Naive thymus-derived CD4-positive, alpha-beta T cell (primary cell): ENCODE measurements at regions of chr12 and their contacts with region 1.

Region 1: DNA sequence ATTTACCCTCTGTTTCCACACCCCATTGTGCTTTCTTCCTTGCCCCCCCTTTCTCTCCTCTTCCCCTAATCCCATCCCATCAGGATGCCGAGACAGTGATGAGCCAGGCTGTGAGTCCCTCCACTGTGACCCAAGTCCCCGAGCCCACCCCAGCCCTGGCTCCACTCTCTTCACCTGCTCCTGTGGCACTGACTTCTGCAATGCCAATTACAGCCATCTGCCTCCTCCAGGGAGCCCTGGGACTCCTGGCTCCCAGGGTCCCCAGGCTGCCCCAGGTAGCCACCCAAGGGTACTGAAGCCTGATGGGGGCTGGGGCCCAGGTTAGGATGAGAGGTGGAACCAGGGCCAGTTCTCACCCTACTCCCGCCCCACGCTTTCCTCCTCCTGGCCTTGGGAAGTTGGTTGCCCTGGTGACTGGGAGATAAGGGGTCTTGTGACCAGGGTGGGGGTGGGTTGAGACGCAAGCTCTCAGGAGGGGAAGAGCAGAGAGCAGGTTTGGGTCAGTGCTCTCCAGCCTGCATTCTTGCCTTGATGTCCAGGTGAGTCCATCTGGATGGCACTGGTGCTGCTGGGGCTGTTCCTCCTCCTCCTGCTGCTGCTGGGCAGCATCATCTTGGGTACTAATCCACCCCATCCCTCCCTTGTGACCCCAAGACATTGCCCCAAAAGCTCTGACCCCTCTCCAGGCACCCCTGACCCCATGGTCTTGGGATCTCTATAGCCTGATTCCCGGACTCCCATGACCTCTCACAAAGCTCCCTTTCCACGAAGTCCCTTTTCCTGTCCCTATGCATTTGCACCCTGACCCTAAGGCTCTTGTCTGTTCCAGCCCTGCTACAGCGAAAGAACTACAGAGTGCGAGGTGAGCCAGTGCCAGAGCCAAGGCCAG is 1.2 kb downstream of the AMHR2 start:
- DNase-seq: no peak
- ATAC-seq: no peak
- H3K4me3 ChIP-seq: no peak overlapping the region
- H3K4me3 Mint-ChIP-seq: no peak overlapping the region
- H3K27ac ChIP-seq: no peak overlapping the region
- H3K27ac Mint-ChIP-seq: no peak overlapping the region
- H3K4me1 ChIP-seq: peaks cover 3 to 4% of the 10 kb centered on the region in 2 donors
- H3K4me1 Mint-ChIP-seq: peaks cover 4 to 15% (median 6%) of the 10 kb centered on the region in 7 donors
- H3K27me3 ChIP-seq: no peaks in the 10 kb centered on the region
- H3K27me3 Mint-ChIP-seq: no peaks in the 10 kb centered on the region

Region 2: GRCh38 chr12:53288322-53288721 is 136.5 kb before region 1 on chr12:
- CTCF ChIA-PET with region 1: no interaction called
- POLR2A ChIA-PET with region 1: no interaction called
- intact Hi-C with region 1: no loop called
- DNase-seq: no peak
- ATAC-seq: no peak
- H3K4me3 ChIP-seq: no peak overlapping the region
- H3K4me3 Mint-ChIP-seq: no peak overlapping the region
- H3K27ac ChIP-seq: no peak overlapping the region
- H3K27ac Mint-ChIP-seq: peak overlapping the region in 3 of 9 donors; percentile 16 to 86 (median 34)
- H3K4me1 ChIP-seq: no peaks in the 10 kb centered on the region
- H3K4me1 Mint-ChIP-seq: peaks cover 4 to 11% (median 5%) of the 10 kb centered on the region in 7 donors
- H3K27me3 ChIP-seq: no peaks in the 10 kb centered on the region
- H3K27me3 Mint-ChIP-seq: no peaks in the 10 kb centered on the region

Region 3: DNA sequence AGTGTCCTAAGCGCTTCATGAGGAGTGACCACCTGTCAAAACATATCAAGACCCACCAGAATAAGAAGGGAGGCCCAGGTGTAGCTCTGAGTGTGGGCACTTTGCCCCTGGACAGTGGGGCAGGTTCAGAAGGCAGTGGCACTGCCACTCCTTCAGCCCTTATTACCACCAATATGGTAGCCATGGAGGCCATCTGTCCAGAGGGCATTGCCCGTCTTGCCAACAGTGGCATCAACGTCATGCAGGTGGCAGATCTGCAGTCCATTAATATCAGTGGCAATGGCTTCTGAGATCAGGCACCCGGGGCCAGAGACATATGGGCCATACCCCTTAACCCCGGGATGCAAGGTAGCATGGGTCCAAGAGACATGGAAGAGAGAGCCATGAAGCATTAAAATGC is 13.9 kb before region 1 on chr12:
- CTCF ChIA-PET with region 1: interaction called, 15 read pairs
- POLR2A ChIA-PET with region 1: no interaction called
- intact Hi-C with region 1: loop called in 1 of 2 experiments (anchors 2 kb)
- DNase-seq: no peak
- ATAC-seq: no peak
- H3K4me3 ChIP-seq: no peak overlapping the region
- H3K4me3 Mint-ChIP-seq: no peak overlapping the region
- H3K27ac ChIP-seq: no peak overlapping the region
- H3K27ac Mint-ChIP-seq: peak overlapping the region in 3 of 9 donors; percentile 43 to 63 (median 56)
- H3K4me1 ChIP-seq: peaks cover 7 to 13% of the 10 kb centered on the region in 2 donors
- H3K4me1 Mint-ChIP-seq: peaks cover 22 to 53% (median 41%) of the 10 kb centered on the region in 7 donors
- H3K27me3 ChIP-seq: no peaks in the 10 kb centered on the region
- H3K27me3 Mint-ChIP-seq: no peaks in the 10 kb centered on the region

Region 4: GRCh38 chr12:53508534-53509199 is 83.8 kb after region 1 on chr12:
- CTCF ChIA-PET with region 1: interaction called, 19 read pairs
- POLR2A ChIA-PET with region 1: no interaction called
- intact Hi-C with region 1: loop called in 1 of 2 experiments (anchors 1 kb)
- DNase-seq: peak; percentile 63 to 82 (median 73)
- ATAC-seq: peak; percentile 98
- H3K4me3 ChIP-seq: no peak overlapping the region
- H3K4me3 Mint-ChIP-seq: peak overlapping the region in 1 of 10 donors; percentile 39
- H3K27ac ChIP-seq: peak overlapping the region; percentile 39
- H3K27ac Mint-ChIP-seq: peak overlapping the region in 8 of 9 donors; percentile 13 to 80 (median 66)
- H3K4me1 ChIP-seq: peaks cover 6 to 7% of the 10 kb centered on the region in 2 donors
- H3K4me1 Mint-ChIP-seq: peaks cover 5 to 17% (median 9%) of the 10 kb centered on the region in 7 donors
- H3K27me3 ChIP-seq: no peaks in the 10 kb centered on the region
- H3K27me3 Mint-ChIP-seq: no peaks in the 10 kb centered on the region